ENCODE measurements at regions of chr1 and their contacts with region 1.

Region 1: DNA sequence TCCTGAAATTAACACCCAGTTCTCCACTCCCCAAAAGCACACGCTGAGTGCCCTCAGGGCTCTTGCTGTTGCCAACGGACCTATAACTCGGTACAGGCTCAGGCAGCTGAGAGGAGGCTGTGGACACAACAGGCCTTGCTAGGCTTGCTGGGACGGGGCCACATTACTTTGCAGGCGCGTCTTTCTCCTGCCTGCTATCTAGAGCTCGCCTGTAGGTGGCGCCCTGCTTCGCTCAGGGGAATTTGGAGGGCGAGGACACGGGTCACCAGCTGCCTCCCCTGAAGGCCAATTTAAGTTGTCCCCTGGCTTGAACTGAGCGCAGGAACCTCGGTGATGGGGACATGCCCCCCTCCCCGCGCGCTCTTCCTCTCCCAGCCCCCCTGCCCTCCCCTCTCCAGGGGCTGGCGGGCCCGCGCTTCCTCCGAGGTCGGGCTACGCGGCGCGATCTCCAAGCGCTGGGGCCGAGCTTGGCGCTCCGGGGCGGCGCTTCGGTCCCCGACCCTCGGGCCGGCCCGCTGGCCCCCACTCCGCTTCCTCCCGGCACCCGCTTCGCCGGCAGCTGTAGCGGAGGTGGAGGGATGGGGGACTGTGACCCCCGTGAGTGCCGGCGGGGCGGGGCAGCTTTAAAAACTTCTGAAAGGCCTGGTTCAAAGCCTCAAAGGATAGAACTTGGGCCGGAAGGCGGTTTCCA is 32.4 kb upstream of the NFIA start:
- DNase-seq: peak; percentile 81 to 94 (median 88)
- ATAC-seq: peak; percentile 79
- H3K4me3 ChIP-seq: peak overlapping the region; percentile 65 to 73
- H3K4me3 Mint-ChIP-seq: peak overlapping the region; percentile 84
- H3K27ac ChIP-seq: no peak overlapping the region
- H3K27ac Mint-ChIP-seq: no peak overlapping the region
- H3K4me1 ChIP-seq: peaks cover 22% of the 10 kb centered on the region
- H3K4me1 Mint-ChIP-seq: peaks cover 28% of the 10 kb centered on the region
- H3K27me3 ChIP-seq: peaks cover 0 to 6% of the 10 kb centered on the region in 2 experiments
- H3K27me3 Mint-ChIP-seq: peaks cover 31% of the 10 kb centered on the region
- CTCF ChIP-seq: peak; percentile 86

Region 2: GRCh38 chr1:60621368-60621851 is 428.6 kb before region 1 on chr1:
- CTCF ChIA-PET with region 1: no interaction called
- POLR2A ChIA-PET with region 1: no interaction called
- intact Hi-C with region 1: no loop called
- DNase-seq: no peak
- ATAC-seq: no peak
- H3K4me3 ChIP-seq: no peak overlapping the region
- H3K4me3 Mint-ChIP-seq: no peak overlapping the region
- H3K27ac ChIP-seq: no peak overlapping the region
- H3K27ac Mint-ChIP-seq: no peak overlapping the region
- H3K4me1 ChIP-seq: no peaks in the 10 kb centered on the region
- H3K4me1 Mint-ChIP-seq: no peaks in the 10 kb centered on the region
- H3K27me3 ChIP-seq: peaks cover 0 to 3% of the 10 kb centered on the region in 2 experiments
- H3K27me3 Mint-ChIP-seq: peaks cover 8% of the 10 kb centered on the region
- CTCF ChIP-seq: no peak

Region 3: GRCh38 chr1:61035880-61036279 is 14.1 kb before region 1 on chr1:
- CTCF ChIA-PET with region 1: interaction called, 12 read pairs
- POLR2A ChIA-PET with region 1: no interaction called
- intact Hi-C with region 1: no loop called
- DNase-seq: no peak
- ATAC-seq: no peak
- H3K4me3 ChIP-seq: no peak overlapping the region
- H3K4me3 Mint-ChIP-seq: no peak overlapping the region
- H3K27ac ChIP-seq: no peak overlapping the region
- H3K27ac Mint-ChIP-seq: no peak overlapping the region
- H3K4me1 ChIP-seq: no peaks in the 10 kb centered on the region
- H3K4me1 Mint-ChIP-seq: no peaks in the 10 kb centered on the region
- H3K27me3 ChIP-seq: peaks cover 0 to 2% of the 10 kb centered on the region in 2 experiments
- H3K27me3 Mint-ChIP-seq: peaks cover 5% of the 10 kb centered on the region
- CTCF ChIP-seq: no peak

Region 4: DNA sequence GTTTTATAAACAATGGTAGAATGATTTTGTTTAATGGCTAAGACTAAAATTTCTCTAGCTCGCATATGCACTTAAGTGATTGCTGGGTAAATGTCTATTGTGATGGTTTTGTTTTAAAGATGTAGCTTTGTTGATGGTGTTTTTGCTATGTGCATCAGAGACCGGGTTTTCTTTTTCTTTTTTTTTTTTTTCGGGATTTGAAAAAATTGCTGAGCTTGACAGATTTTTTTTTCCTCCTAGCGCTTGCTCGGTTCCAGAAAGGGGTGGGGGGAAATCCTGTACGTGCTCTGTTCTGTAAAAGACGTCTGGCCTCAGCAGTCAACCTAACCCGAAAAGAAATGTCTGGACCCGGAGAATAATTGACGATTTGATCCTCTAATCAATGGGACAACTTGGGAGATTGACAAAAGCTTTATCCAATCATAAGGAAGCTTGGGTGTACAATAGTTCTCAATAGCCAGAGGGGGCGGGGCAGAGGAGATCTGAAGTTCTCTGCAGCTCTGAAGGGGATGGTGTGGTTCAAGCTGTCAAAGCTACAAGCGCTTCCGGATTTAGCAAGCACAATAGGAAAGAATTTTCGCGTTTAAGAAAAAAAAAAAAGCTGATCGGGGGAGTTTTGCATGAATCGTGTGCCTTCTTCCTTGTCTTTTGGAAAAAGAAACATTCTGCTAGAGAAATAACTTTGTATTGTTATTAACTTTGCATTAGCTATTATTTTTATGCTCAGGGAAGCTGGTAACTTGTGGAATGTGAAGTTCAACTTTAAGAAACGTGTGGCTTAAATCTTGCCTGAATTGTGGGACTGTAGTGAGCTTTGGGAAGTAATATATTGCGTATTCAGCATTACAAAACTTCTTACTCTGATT is 27.9 kb after region 1 on chr1:
- CTCF ChIA-PET with region 1: interaction called, 42 read pairs
- POLR2A ChIA-PET with region 1: interaction called, 66 read pairs
- intact Hi-C with region 1: loop called (anchors 1 kb)
- DNase-seq: peak; percentile 77 to 99 (median 91)
- ATAC-seq: peak; percentile 68
- H3K4me3 ChIP-seq: peak overlapping the region; percentile 66 to 74
- H3K4me3 Mint-ChIP-seq: peak overlapping the region; percentile 86
- H3K27ac ChIP-seq: peak overlapping the region; percentile 67 to 76
- H3K27ac Mint-ChIP-seq: peak overlapping the region; percentile 98
- H3K4me1 ChIP-seq: peaks cover 42% of the 10 kb centered on the region
- H3K4me1 Mint-ChIP-seq: peaks cover 47% of the 10 kb centered on the region
- H3K27me3 ChIP-seq: no peaks in the 10 kb centered on the region
- H3K27me3 Mint-ChIP-seq: no peaks in the 10 kb centered on the region
- CTCF ChIP-seq: no peak

Region 5: DNA sequence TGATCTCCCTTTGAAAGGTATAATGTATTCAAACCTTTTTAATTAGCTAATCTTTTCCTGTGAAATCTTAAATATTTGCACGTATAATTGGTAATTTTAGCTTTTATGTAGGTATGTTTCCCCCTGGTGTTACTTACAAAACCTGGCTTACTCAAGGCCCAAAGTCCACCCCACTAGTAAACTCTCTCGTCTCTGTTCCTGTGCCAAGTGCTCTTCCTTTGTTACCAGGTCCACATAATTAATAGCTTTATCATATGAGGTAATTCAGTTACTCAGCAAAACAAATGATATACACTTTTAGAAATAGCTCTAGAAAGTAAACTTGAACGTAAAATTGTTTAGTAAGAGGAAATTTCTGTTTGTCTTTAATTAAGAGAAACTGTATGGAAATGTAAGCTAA is 69.1 kb after region 1 on chr1:
- CTCF ChIA-PET with region 1: interaction called, 9 read pairs
- POLR2A ChIA-PET with region 1: no interaction called
- intact Hi-C with region 1: loop called in 1 of 2 experiments (anchors 2 kb)
- DNase-seq: peak in 1 of 9 experiments; percentile 5
- ATAC-seq: no peak
- H3K4me3 ChIP-seq: no peak overlapping the region
- H3K4me3 Mint-ChIP-seq: no peak overlapping the region
- H3K27ac ChIP-seq: no peak overlapping the region
- H3K27ac Mint-ChIP-seq: no peak overlapping the region
- H3K4me1 ChIP-seq: no peaks in the 10 kb centered on the region
- H3K4me1 Mint-ChIP-seq: no peaks in the 10 kb centered on the region
- H3K27me3 ChIP-seq: no peaks in the 10 kb centered on the region
- H3K27me3 Mint-ChIP-seq: no peaks in the 10 kb centered on the region
- CTCF ChIP-seq: no peak

Region 6: DNA sequence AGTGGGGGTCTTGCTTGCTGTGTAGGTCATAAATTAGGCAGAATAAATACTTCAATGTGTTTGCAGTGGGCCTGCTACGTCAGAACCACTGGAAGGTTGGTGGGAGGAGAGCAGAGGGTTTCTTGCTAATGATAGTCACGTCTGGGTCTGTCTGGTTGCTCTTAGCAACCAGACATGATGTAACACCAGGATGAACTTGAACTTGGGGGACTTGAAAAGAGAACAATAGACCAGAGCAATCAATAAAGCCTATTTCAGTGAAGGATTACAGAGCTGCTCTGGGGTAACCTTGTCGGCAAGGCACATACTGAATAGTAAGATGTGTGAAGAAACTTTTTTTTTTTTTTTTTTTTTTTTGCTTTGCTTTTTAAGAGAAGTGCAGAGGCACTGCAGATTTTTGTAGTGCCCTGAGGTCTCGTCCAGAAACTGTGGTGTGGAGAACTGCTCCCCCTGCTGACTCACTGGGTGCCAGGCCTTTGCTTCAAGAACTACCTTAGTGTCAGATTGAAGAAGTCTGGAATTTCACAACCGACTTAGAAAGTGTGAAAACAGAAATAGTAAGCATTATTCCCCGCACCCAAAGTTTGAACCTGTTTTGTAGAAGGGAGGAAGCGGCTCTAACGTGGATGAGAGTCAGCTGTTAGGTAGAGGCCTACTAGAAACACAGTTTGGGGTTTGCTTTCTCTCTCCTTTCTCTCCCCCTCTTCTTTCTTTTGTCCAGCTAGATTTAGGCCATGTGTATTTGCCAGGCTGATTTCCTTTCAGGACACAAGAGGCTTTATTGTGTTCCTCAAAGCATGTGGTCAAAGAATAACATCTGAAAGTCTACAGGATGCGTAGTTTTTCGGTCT is 403.3 kb after region 1 on chr1:
- CTCF ChIA-PET with region 1: interaction called, 43 read pairs
- POLR2A ChIA-PET with region 1: interaction called, 4 read pairs
- intact Hi-C with region 1: loop called (anchors 1 kb)
- DNase-seq: peak; percentile 42 to 81 (median 69)
- ATAC-seq: peak; percentile 87
- H3K4me3 ChIP-seq: no peak overlapping the region
- H3K4me3 Mint-ChIP-seq: no peak overlapping the region
- H3K27ac ChIP-seq: no peak overlapping the region
- H3K27ac Mint-ChIP-seq: peak overlapping the region; percentile 71
- H3K4me1 ChIP-seq: no peaks in the 10 kb centered on the region
- H3K4me1 Mint-ChIP-seq: peaks cover 10% of the 10 kb centered on the region
- H3K27me3 ChIP-seq: no peaks in the 10 kb centered on the region
- H3K27me3 Mint-ChIP-seq: no peaks in the 10 kb centered on the region
- CTCF ChIP-seq: peak; percentile 57

Region 7: GRCh38 chr1:61641578-61642336 is 591.8 kb after region 1 on chr1:
- CTCF ChIA-PET with region 1: interaction called, 3 read pairs
- POLR2A ChIA-PET with region 1: no interaction called
- intact Hi-C with region 1: loop called in 1 of 2 experiments (anchors 1 kb)
- DNase-seq: peak; percentile 16 to 70 (median 57)
- ATAC-seq: peak; percentile 84
- H3K4me3 ChIP-seq: peak overlapping the region in 1 of 2 experiments; percentile 25
- H3K4me3 Mint-ChIP-seq: peak overlapping the region; percentile 69
- H3K27ac ChIP-seq: no peak overlapping the region
- H3K27ac Mint-ChIP-seq: peak overlapping the region; percentile 78
- H3K4me1 ChIP-seq: no peaks in the 10 kb centered on the region
- H3K4me1 Mint-ChIP-seq: peaks cover 11% of the 10 kb centered on the region
- H3K27me3 ChIP-seq: peaks cover 0 to 4% of the 10 kb centered on the region in 2 experiments
- H3K27me3 Mint-ChIP-seq: peaks cover 2% of the 10 kb centered on the region
- CTCF ChIP-seq: peak; percentile 73

Region 8: DNA sequence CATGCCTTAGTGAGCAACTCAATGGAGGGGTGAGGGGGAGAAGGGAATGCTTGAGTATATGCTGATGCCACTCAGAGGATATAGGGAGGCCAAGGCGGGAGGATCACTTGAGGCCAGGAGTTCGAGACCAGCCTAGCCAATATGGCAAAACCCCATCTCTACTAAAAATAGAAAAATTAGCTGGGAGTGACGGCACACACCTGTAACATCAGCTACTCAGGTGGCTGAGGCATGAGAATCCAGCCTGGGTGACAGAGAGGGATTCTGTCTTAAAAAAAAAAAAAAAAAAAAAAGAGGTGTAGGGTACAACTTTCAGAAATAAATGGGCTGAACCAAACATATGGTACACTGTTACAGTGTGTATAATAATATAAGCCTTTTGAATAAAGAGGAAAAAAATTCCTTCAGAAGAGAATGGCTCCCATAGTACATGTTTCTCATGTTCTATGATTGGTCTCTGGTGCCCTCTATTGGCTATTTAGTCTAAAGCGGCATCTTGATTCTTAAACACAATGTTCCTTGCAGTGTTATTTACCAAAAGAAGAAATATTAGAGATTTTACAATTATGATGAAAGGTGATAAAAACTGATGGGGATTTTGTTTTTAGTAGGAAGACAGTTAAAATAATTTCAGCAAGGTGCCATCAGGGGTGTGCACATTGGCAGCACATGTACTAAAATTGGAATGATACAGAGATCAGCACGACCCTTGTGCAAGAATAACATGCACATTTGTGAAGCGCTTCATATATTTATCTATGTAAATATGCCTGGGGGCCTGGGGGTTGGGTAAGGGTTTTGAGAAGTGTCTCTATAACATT is 802.1 kb after region 1 on chr1:
- CTCF ChIA-PET with region 1: interaction called, 40 read pairs
- POLR2A ChIA-PET with region 1: no interaction called
- intact Hi-C with region 1: loop called (anchors 1 to 5 kb)
- DNase-seq: peak in 3 of 9 experiments; percentile 17 to 74 (median 67)
- ATAC-seq: peak; percentile 46
- H3K4me3 ChIP-seq: no peak overlapping the region
- H3K4me3 Mint-ChIP-seq: no peak overlapping the region
- H3K27ac ChIP-seq: no peak overlapping the region
- H3K27ac Mint-ChIP-seq: no peak overlapping the region
- H3K4me1 ChIP-seq: no peaks in the 10 kb centered on the region
- H3K4me1 Mint-ChIP-seq: no peaks in the 10 kb centered on the region
- H3K27me3 ChIP-seq: no peaks in the 10 kb centered on the region
- H3K27me3 Mint-ChIP-seq: no peaks in the 10 kb centered on the region
- CTCF ChIP-seq: peak; percentile 94